ENCODE measurements at regions of chr3 and their contacts with region 1.

Region 1: GRCh38 chr3:99645277-99646106 is 7.1 kb downstream of the COL8A1 start:
- DNase-seq: peak in 1 of 2 experiments; percentile 41
- ATAC-seq: peak in 1 of 2 experiments; percentile 69; a peak in 3 of 6 replicates
- H3K4me3 ChIP-seq: no peak overlapping the region
- H3K27ac ChIP-seq: no peak overlapping the region
- H3K4me1 ChIP-seq: peaks cover 3% of the 10 kb centered on the region; the same call in 1 of the 3 replicates
- CTCF ChIP-seq: peak; percentile 66
- EP300 ChIP-seq: no peak
- POLR2A ChIP-seq: no peak
- RAD21 ChIP-seq: peak in 1 of 2 experiments; percentile 31; a peak in 3 of 5 replicates

Region 2: GRCh38 chr3:99686955-99687612 is 41.6 kb after region 1 on chr3:
- CTCF ChIA-PET with region 1: interaction called, 16 read pairs
- POLR2A ChIA-PET with region 1: no interaction called
- DNase-seq: peak; percentile 20 to 53
- ATAC-seq: peak; percentile 82 to 91; a peak in 5 of 6 replicates
- H3K4me3 ChIP-seq: no peak overlapping the region
- H3K27ac ChIP-seq: no peak overlapping the region
- H3K4me1 ChIP-seq: no peaks in the 10 kb centered on the region
- CTCF ChIP-seq: peak; percentile 76
- EP300 ChIP-seq: no peak
- POLR2A ChIP-seq: no peak
- RAD21 ChIP-seq: peak; percentile 71 to 80

Region 3: DNA sequence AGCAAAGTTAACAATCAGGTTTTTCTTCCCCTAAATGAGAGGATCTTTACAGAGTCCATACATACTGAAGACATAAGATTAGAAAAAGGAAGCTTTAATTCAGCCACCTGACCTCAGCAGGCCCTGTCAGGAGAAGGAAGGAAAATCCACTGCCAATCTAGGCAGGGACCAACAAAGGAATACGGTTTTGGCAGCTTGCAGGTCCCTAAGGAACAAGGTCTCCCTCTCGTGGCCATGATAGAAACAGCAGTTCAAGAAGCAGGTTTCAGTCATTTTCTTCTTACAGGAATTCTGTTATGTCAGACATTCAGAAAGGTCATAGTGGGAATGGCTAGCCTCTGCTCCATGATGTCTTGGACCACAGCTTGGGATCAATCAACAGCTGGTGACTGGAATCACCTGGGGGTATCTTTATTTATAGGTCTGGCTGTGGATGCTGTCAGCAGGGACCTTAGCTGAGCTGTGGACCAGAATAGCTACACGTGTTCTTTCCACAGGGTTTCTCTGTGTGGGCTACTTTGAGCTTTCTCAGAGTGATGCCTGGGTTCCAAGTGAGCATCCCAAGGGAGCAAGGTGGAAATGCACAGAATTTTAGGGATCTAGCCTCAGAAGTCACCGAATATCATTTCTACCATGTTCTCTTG is 162.8 kb after region 1 on chr3:
- CTCF ChIA-PET with region 1: no interaction called
- POLR2A ChIA-PET with region 1: no interaction called
- DNase-seq: peak; percentile 44 to 85
- ATAC-seq: peak; percentile 64 to 76; a peak in 4 of 6 replicates
- H3K4me3 ChIP-seq: no peak overlapping the region
- H3K27ac ChIP-seq: no peak overlapping the region
- H3K4me1 ChIP-seq: no peaks in the 10 kb centered on the region
- CTCF ChIP-seq: peak; percentile 60
- EP300 ChIP-seq: no peak
- POLR2A ChIP-seq: no peak
- RAD21 ChIP-seq: peak; percentile 31 to 35; a peak in 2 of 5 replicates

Measured in A549 (cell line).